Activated CD4-positive, alpha-beta T cell treated with anti-CD3 and anti-CD28 coated beads for 36 hours (primary cell): ENCODE measurements at regions of chr1 and their contacts with region 1.

Region 1: DNA sequence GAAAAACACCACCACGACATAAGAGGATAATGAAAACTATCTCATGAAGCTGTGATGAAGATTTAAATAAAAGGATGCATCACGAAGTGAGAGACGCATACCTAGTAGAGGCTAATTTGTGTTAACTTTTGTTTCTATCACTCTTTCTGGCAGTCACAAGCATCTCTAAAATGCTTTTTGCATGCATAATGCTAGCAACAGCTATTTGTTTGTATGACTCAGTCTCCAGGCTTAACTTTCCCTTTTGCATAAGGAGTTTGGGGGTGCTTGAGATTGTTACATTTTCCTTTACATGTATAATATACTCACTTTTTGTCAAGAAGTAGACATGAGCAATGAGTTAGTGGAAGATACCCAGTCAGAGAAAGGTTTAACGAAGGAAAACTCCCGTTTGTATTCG is 385.4 kb downstream of the DISC1 start:
- DNase-seq: no peak
- ATAC-seq: no peak
- H3K4me3 Mint-ChIP-seq: no peak overlapping the region
- H3K27ac Mint-ChIP-seq: no peak overlapping the region
- H3K4me1 Mint-ChIP-seq: no peaks in the 10 kb centered on the region
- H3K27me3 Mint-ChIP-seq: no peaks in the 10 kb centered on the region

Region 2: GRCh38 chr1:232029315-232029714 is 17.4 kb after region 1 on chr1:
- CTCF ChIA-PET with region 1: no interaction called
- POLR2A ChIA-PET with region 1: no interaction called
- intact Hi-C with region 1: loop called in 1 of 2 experiments (anchors 1 kb)
- DNase-seq: no peak
- ATAC-seq: no peak
- H3K4me3 Mint-ChIP-seq: no peak overlapping the region
- H3K27ac Mint-ChIP-seq: no peak overlapping the region
- H3K4me1 Mint-ChIP-seq: no peaks in the 10 kb centered on the region
- H3K27me3 Mint-ChIP-seq: no peaks in the 10 kb centered on the region